ENCODE measurements at regions of chr9 and their contacts with region 1.

Region 1: GRCh38 chr9:37592108-37592951 is at the start of gene TOMM5:
- H3K4me3 ChIP-seq: peak within 1 kb of the TSS; percentile 83
- H3K27ac ChIP-seq: peak within 1 kb of the TSS; percentile 80
- H3K4me1 ChIP-seq: no peaks in the 10 kb centered on the region
- CTCF ChIP-seq: no peak

Region 2: DNA sequence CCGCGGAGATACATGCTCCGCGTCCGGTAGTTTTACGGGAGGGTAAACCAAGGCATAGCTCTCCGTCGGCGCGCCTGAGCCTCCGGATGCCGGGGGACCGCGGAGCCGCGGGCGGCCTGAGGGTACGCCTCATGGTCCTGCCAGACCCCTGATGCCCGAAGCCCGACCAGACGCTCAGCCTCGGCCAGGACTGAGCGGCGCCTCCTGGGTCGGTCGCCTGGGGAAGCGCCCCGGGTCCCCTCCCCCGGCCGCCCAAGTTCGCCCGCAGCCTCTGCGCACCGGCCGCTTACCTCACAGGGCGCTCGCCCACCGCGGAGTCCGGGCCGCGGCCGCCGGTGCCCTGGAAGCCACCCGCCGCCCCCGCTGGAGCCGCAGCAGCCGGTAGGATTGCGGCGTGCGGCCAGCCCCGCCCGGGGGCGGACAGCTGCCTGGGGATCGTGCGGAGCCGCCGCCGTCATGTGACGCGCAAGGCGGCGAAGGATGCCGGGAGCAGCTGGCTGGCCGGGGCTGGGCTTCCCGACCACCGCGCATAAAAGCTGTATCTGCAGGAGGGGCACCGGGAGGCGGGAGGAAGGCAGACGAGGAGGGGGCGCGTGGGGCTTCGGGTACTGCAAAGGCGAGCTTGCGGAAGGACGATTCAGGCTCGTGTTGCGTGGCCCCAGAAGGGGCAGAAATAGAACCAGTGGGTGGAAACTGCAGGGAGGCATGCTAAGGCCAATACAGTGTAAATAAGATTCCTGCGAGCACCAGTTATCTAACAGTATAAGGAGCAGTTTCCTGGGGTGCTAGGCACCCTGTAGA is 16.2 kb before region 1 on chr9 and contains the start of gene FBXO10:
- CTCF ChIA-PET with region 1: interaction called, 16 read pairs
- POLR2A ChIA-PET with region 1: interaction called, 42 read pairs
- H3K4me3 ChIP-seq: peak within 1 kb of the TSS; percentile 80
- H3K27ac ChIP-seq: peak within 1 kb of the TSS; percentile 46; the same call in 1 of the 2 replicates
- H3K4me1 ChIP-seq: peaks cover 5% of the 10 kb centered on the region; the same call in 1 of the 2 replicates
- CTCF ChIP-seq: no peak

Region 3: GRCh38 chr9:37800631-37801286 is 208.4 kb after region 1 on chr9 and contains the start of gene DCAF10:
- CTCF ChIA-PET with region 1: no interaction called
- POLR2A ChIA-PET with region 1: no interaction called
- H3K4me3 ChIP-seq: peak within 1 kb of the TSS; percentile 55
- H3K27ac ChIP-seq: peak within 1 kb of the TSS; percentile 76
- H3K4me1 ChIP-seq: no peaks in the 10 kb centered on the region
- CTCF ChIP-seq: peak; percentile 57